Ascending aorta (tissue), 2 donors: ENCODE measurements at regions of chr6 and their contacts with region 1.

Region 1: GRCh38 chr6:89161326-89162046 is 15.6 kb downstream of the PM20D2 start:
- DNase-seq: no peak
- H3K4me3 ChIP-seq: peak overlapping the region in 1 of 2 donors; percentile 47
- H3K27ac ChIP-seq: peak overlapping the region; percentile 88 to 94
- H3K4me1 ChIP-seq: peaks cover 5 to 19% of the 10 kb centered on the region in 2 donors
- H3K27me3 ChIP-seq: no peaks in the 10 kb centered on the region
- CTCF ChIP-seq: no peak

Region 2: GRCh38 chr6:89145787-89146646 is 15.5 kb before region 1 on chr6 and contains the start of gene PM20D2:
- intact Hi-C with region 1: loop called (anchors 1 kb)
- DNase-seq: peak in 1 of 2 donors; percentile 82
- H3K4me3 ChIP-seq: peak within 1 kb of the TSS; percentile 86 to 97
- H3K27ac ChIP-seq: peak within 1 kb of the TSS; percentile 92 to 98
- H3K4me1 ChIP-seq: peaks cover 0 to 11% of the 10 kb centered on the region in 2 donors
- H3K27me3 ChIP-seq: no peaks in the 10 kb centered on the region
- CTCF ChIP-seq: no peak
- total RNA-seq, gene PM20D2: 8.8 TPM

Region 3: DNA sequence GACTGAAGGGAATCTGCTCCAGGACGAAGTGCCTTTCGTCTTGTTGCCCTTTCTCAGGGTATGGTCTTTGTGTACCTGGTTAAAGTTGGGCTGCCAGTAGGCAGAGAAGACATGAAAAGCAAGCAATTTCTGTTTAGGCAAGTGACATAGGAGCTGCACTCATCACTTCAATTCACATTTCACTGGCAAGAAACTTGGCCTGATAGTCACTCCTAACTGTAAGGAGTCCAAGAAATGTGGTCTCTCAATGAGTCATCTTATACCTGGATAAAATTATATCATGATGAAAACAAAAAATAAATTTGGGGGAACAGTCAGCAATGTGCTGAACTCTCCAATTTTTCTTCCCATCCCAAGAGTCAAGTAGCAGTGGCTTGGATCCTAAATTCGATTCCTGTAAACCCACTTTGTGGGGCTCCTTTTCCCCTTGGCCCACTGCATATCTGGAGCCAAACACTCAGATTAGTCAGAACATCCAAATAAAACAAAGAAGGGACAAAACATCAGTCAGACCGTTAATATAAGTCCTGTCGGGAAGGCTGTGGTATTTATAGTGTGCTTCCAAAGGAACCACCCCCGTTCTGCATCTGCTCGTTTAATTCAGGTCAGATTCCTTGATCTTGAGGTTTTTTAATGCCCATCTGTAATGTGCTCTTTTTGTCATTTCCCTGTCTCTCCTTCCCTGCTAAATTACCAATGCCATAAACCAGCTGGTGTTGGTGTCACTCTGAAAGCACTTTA is 60.7 kb after region 1 on chr6:
- intact Hi-C with region 1: loop called (anchors 5 kb)
- DNase-seq: no peak
- H3K4me3 ChIP-seq: peak overlapping the region; percentile 25 to 32
- H3K27ac ChIP-seq: peak overlapping the region; percentile 67 to 80
- H3K4me1 ChIP-seq: peaks cover 0 to 16% of the 10 kb centered on the region in 2 donors
- H3K27me3 ChIP-seq: no peaks in the 10 kb centered on the region
- CTCF ChIP-seq: no peak